ENCODE measurements at regions of chr1 and their contacts with region 1.

Region 1: DNA sequence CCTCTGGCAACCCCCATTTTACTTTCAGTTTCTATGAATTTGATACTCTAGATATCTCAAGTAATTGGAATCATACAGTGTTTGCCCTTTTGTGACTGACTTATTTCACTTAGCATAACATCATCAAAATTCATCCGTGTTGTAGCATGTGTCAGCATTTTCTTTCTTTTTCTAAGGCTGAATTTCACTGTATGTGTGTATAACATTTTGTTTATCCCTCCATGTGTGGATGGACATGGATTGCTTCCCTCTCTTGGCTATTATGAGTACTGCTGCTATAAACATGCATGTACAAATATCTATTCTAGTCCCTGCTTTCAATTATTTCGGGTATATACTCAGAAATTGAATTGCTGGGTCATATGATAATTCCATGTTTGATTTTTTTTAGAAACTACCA is 97.3 kb downstream of the MAP3K21 start:
- DNase-seq: peak; percentile 44
- ATAC-seq: peak; percentile 79
- H3K4me3 ChIP-seq: peak overlapping the region; percentile 37; the same call in 1 of the 2 replicates
- H3K27ac ChIP-seq: no peak overlapping the region
- H3K4me1 ChIP-seq: no peaks in the 10 kb centered on the region
- H3K27me3 ChIP-seq: no peaks in the 10 kb centered on the region
- CTCF ChIP-seq: peak; percentile 62

Region 2: GRCh38 chr1:233304489-233305102 is 120.2 kb before region 1 on chr1:
- CTCF ChIA-PET with region 1: no interaction called
- POLR2A ChIA-PET with region 1: no interaction called
- intact Hi-C with region 1: loop called (anchors 1 kb)
- DNase-seq: peak; percentile 74
- ATAC-seq: peak; percentile 71
- H3K4me3 ChIP-seq: no peak overlapping the region
- H3K27ac ChIP-seq: no peak overlapping the region
- H3K4me1 ChIP-seq: peaks cover 1% of the 10 kb centered on the region; the same call in 1 of the 2 replicates
- H3K27me3 ChIP-seq: no peaks in the 10 kb centered on the region
- CTCF ChIP-seq: peak; percentile 93

Region 3: GRCh38 chr1:233319272-233319671 is 105.5 kb before region 1 on chr1:
- CTCF ChIA-PET with region 1: no interaction called
- POLR2A ChIA-PET with region 1: interaction called, 6 read pairs
- intact Hi-C with region 1: loop called (anchors 5 kb)
- DNase-seq: no peak
- ATAC-seq: no peak
- H3K4me3 ChIP-seq: no peak overlapping the region
- H3K27ac ChIP-seq: no peak overlapping the region
- H3K4me1 ChIP-seq: peaks cover 19% of the 10 kb centered on the region
- H3K27me3 ChIP-seq: no peaks in the 10 kb centered on the region
- CTCF ChIP-seq: no peak

Region 4: GRCh38 chr1:233364695-233365539 is 59.9 kb before region 1 on chr1:
- CTCF ChIA-PET with region 1: no interaction called
- POLR2A ChIA-PET with region 1: no interaction called
- intact Hi-C with region 1: loop called (anchors 1 kb)
- DNase-seq: peak; percentile 65
- ATAC-seq: peak; percentile 31; the same call in 1 of the 2 replicates
- H3K4me3 ChIP-seq: no peak overlapping the region
- H3K27ac ChIP-seq: no peak overlapping the region
- H3K4me1 ChIP-seq: peaks cover 23% of the 10 kb centered on the region
- H3K27me3 ChIP-seq: no peaks in the 10 kb centered on the region
- CTCF ChIP-seq: peak; percentile 87

Region 5: GRCh38 chr1:233394860-233395717 is 29.7 kb before region 1 on chr1:
- CTCF ChIA-PET with region 1: interaction called, 9 read pairs
- POLR2A ChIA-PET with region 1: no interaction called
- intact Hi-C with region 1: loop called (anchors 1 kb)
- DNase-seq: peak; percentile 90
- ATAC-seq: peak; percentile 97
- H3K4me3 ChIP-seq: no peak overlapping the region
- H3K27ac ChIP-seq: no peak overlapping the region
- H3K4me1 ChIP-seq: 0 out of 2 replicates have a peak, but pooled peaks cover 3% of the 10 kb centered on the region
- H3K27me3 ChIP-seq: no peaks in the 10 kb centered on the region
- CTCF ChIP-seq: peak; percentile 98

Region 6: DNA sequence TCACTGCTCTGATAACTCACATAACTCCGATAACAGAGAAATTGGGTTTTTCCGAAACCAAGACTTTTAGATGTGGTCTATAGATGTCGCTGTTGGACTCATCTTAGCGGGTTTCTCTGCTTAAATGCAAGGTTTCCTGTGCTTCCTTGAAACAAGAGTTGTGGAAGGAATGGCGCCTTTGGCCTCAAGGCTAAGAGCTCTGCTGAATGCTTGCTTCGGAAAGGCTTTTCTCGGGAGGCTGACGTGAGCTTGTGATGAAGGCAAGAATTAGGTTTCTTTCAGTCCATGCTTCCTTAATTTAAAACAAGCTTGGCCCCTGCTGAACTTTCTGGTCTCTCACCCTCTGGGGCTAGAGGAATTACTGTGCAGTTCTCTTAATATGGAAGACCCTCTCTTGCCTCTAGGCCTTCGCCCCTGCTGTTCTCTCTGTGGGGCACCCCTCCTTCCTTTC is 16.2 kb after region 1 on chr1:
- CTCF ChIA-PET with region 1: no interaction called
- POLR2A ChIA-PET with region 1: no interaction called
- intact Hi-C with region 1: no loop called
- DNase-seq: peak; percentile 96
- ATAC-seq: peak; percentile 41
- H3K4me3 ChIP-seq: no peak overlapping the region
- H3K27ac ChIP-seq: no peak overlapping the region
- H3K4me1 ChIP-seq: peaks cover 30% of the 10 kb centered on the region
- H3K27me3 ChIP-seq: no peaks in the 10 kb centered on the region
- CTCF ChIP-seq: peak; percentile 93